Aorta (tissue), 5 donors: ENCODE measurements at regions of chr7 and their contacts with region 1.

Region 1: DNA sequence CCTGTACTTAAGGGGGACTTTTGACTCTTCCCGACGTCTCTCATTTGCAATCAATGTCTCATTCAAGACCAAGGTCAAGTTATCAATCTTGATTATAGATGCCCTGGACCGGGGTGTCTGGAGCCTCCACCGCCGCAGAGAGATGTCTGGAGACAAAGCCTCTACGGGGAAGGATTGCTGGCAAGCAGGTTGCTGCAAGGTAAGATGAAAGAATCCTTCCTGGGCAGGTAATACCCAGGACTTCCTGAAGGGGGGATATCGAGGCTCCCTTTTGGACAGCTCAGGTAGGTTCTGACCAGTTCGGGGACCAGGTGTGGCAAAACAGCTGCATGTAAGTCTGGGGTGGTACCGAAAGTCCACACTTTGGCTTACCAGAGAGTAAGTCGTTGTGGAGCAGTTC is 12.5 kb upstream of the CUX1 start:
- DNase-seq: peak in 1 of 2 donors; percentile 62
- ATAC-seq: no peak
- H3K4me3 ChIP-seq: no peak overlapping the region
- H3K27ac ChIP-seq: no peak overlapping the region
- H3K4me1 ChIP-seq: no peaks in the 10 kb centered on the region
- H3K27me3 ChIP-seq: no peaks in the 10 kb centered on the region

Region 2: GRCh38 chr7:101743241-101743994 is 61.5 kb before region 1 on chr7:
- intact Hi-C with region 1: loop called in 1 of 2 experiments (anchors 5 kb)
- DNase-seq: peak; percentile 64 to 85
- ATAC-seq: peak; percentile 50
- H3K4me3 ChIP-seq: peak overlapping the region; percentile 2 to 56
- H3K27ac ChIP-seq: no peak overlapping the region
- H3K4me1 ChIP-seq: no peaks in the 10 kb centered on the region
- H3K27me3 ChIP-seq: no peaks in the 10 kb centered on the region